Transverse colon (tissue), 4 donors: ENCODE measurements at regions of chr9 and their contacts with region 1.

Region 1: DNA sequence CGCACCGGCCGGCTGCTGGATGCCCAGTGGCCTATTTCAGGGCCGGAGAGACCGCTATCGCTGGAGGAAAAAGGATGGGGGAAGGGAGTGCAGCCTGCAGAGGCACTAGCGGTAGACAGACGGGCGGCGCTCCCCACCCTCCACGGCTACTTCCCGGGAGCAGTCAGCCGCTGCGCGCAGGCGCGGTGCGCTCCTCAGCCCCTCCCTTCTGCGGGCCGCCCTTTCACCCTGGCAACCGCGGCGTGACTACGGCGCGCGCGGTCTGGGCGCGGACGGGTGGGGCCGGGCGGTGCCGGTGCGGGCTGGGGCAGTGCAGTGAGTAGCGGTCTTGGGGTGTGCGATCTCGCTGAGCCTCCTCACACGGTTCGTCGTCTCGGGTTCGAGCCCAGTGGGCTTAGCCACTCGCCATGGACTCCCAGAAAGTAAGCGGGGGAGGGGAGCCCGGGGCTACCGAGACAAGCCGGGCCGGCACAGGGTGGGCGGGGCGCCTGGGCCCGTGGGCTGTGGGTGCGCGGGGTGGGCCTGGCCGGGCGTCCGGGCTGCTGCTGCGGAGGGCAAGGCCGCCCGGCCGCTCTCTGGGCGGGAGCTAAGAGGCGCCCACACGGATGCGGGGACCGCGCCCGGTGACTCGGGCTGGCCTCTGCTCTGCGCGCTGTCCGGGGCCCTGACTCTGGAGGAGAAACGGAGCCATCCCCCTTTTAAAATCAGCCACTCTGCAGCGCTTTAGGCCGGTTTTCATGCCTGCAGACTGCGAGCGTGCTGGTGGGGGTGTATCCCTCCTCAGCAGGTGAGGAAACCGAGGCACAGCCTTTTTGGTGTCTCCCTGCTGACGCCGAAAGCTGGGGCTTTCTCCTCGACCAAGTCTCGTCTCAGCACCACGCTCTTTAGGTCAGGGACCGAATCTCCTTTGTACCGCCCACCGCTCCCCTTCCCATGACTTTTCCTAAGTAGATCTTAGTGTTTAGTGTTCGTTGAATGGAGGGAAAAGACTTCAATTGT is at the start of gene FSD1L:
- DNase-seq: peak; percentile 96
- H3K4me3 ChIP-seq: peak within 1 kb of the TSS; percentile 73 to 88 (median 73)
- H3K27ac ChIP-seq: peak within 1 kb of the TSS; percentile 77 to 90 (median 84)
- H3K4me1 ChIP-seq: peaks cover 0 to 26% (median 20%) of the 10 kb centered on the region in 4 donors
- H3K27me3 ChIP-seq: no peaks in the 10 kb centered on the region
- CTCF ChIP-seq: peak in 2 of 5 experiments; percentile 17 to 29
- EP300 ChIP-seq: peak; percentile 14
- POLR2A ChIP-seq: peak; percentile 33
- total RNA-seq, gene FSD1L: 1.8 to 16.8 (median 7.0) TPM

Region 2: GRCh38 chr9:105708405-105708804 is 260.3 kb after region 1 on chr9:
- in situ Hi-C with region 1: loop called in 2 of 4 experiments (anchors 25 kb)
- intact Hi-C with region 1: no loop called
- DNase-seq: no peak
- H3K4me3 ChIP-seq: no peak overlapping the region
- H3K27ac ChIP-seq: no peak overlapping the region
- H3K4me1 ChIP-seq: peaks cover 0 to 8% (median 3%) of the 10 kb centered on the region in 4 donors
- H3K27me3 ChIP-seq: no peaks in the 10 kb centered on the region
- CTCF ChIP-seq: no peak
- EP300 ChIP-seq: no peak
- POLR2A ChIP-seq: no peak